IMR-90 (cell line): ENCODE measurements at regions of chr2 and their contacts with region 1.

Region 1: GRCh38 chr2:63698825-63699548 is 110.2 kb downstream of the MDH1 start:
- DNase-seq: peak; percentile 79
- ATAC-seq: peak; percentile 98
- H3K4me3 ChIP-seq: no peak overlapping the region
- H3K27ac ChIP-seq: no peak overlapping the region; the same call in 1 of the 2 replicates
- H3K4me1 ChIP-seq: peaks cover 5% of the 10 kb centered on the region; the same call in 1 of the 2 replicates
- H3K27me3 ChIP-seq: no peaks in the 10 kb centered on the region
- CTCF ChIP-seq: peak; percentile 59
- POLR2A ChIP-seq: no peak
- RAD21 ChIP-seq: peak; percentile 62

Region 2: GRCh38 chr2:63594660-63595059 is 104.3 kb before region 1 on chr2:
- CTCF ChIA-PET with region 1: no interaction called
- POLR2A ChIA-PET with region 1: no interaction called
- dilution Hi-C with region 1: no loop called
- in situ Hi-C with region 1: no loop called
- intact Hi-C with region 1: no loop called
- DNase-seq: no peak
- ATAC-seq: no peak
- H3K4me3 ChIP-seq: no peak overlapping the region
- H3K27ac ChIP-seq: no peak overlapping the region
- H3K4me1 ChIP-seq: peaks cover 2% of the 10 kb centered on the region; the same call in 1 of the 2 replicates
- H3K27me3 ChIP-seq: no peaks in the 10 kb centered on the region
- CTCF ChIP-seq: no peak
- POLR2A ChIP-seq: no peak
- RAD21 ChIP-seq: no peak

Region 3: GRCh38 chr2:63841254-63842022 is 142.5 kb after region 1 on chr2 and contains the start of gene UGP2:
- CTCF ChIA-PET with region 1: interaction called, 15 read pairs
- POLR2A ChIA-PET with region 1: interaction called, 4 read pairs
- dilution Hi-C with region 1: no loop called
- in situ Hi-C with region 1: no loop called
- intact Hi-C with region 1: loop called (anchors 1 kb)
- DNase-seq: peak; percentile 92
- ATAC-seq: peak; percentile 82
- H3K4me3 ChIP-seq: peak within 1 kb of the TSS; percentile 69
- H3K27ac ChIP-seq: peak within 1 kb of the TSS; percentile 90
- H3K4me1 ChIP-seq: peaks cover 6% of the 10 kb centered on the region
- H3K27me3 ChIP-seq: no peaks in the 10 kb centered on the region
- CTCF ChIP-seq: 0 out of 2 replicates have a peak, but pooled peaks have one; percentile 27
- POLR2A ChIP-seq: peak; percentile 93
- RAD21 ChIP-seq: no peak; the same call in 1 of the 2 replicates
- total RNA-seq, gene UGP2: 58.8 and 101 TPM in 2 replicates

Region 4: GRCh38 chr2:63849381-63850203 is 150.6 kb after region 1 on chr2:
- CTCF ChIA-PET with region 1: interaction called, 4 read pairs
- POLR2A ChIA-PET with region 1: no interaction called
- dilution Hi-C with region 1: loop called (anchors 25 kb)
- in situ Hi-C with region 1: loop called (anchors 10 kb)
- intact Hi-C with region 1: no loop called
- DNase-seq: no peak
- ATAC-seq: peak; percentile 81
- H3K4me3 ChIP-seq: no peak overlapping the region
- H3K27ac ChIP-seq: peak overlapping the region; percentile 26; the same call in 1 of the 2 replicates
- H3K4me1 ChIP-seq: peaks cover 14% of the 10 kb centered on the region
- H3K27me3 ChIP-seq: no peaks in the 10 kb centered on the region
- CTCF ChIP-seq: no peak
- POLR2A ChIP-seq: no peak
- RAD21 ChIP-seq: no peak

Region 5: GRCh38 chr2:63861220-63861822 is 162.3 kb after region 1 on chr2:
- CTCF ChIA-PET with region 1: interaction called, 14 read pairs
- POLR2A ChIA-PET with region 1: no interaction called
- dilution Hi-C with region 1: loop called (anchors 25 kb)
- in situ Hi-C with region 1: loop called (anchors 10 kb)
- intact Hi-C with region 1: no loop called
- DNase-seq: peak; percentile 58
- ATAC-seq: peak; percentile 52
- H3K4me3 ChIP-seq: no peak overlapping the region
- H3K27ac ChIP-seq: no peak overlapping the region
- H3K4me1 ChIP-seq: peaks cover 13% of the 10 kb centered on the region
- H3K27me3 ChIP-seq: no peaks in the 10 kb centered on the region
- CTCF ChIP-seq: peak; percentile 61
- POLR2A ChIP-seq: no peak
- RAD21 ChIP-seq: peak; percentile 70

Region 6: DNA sequence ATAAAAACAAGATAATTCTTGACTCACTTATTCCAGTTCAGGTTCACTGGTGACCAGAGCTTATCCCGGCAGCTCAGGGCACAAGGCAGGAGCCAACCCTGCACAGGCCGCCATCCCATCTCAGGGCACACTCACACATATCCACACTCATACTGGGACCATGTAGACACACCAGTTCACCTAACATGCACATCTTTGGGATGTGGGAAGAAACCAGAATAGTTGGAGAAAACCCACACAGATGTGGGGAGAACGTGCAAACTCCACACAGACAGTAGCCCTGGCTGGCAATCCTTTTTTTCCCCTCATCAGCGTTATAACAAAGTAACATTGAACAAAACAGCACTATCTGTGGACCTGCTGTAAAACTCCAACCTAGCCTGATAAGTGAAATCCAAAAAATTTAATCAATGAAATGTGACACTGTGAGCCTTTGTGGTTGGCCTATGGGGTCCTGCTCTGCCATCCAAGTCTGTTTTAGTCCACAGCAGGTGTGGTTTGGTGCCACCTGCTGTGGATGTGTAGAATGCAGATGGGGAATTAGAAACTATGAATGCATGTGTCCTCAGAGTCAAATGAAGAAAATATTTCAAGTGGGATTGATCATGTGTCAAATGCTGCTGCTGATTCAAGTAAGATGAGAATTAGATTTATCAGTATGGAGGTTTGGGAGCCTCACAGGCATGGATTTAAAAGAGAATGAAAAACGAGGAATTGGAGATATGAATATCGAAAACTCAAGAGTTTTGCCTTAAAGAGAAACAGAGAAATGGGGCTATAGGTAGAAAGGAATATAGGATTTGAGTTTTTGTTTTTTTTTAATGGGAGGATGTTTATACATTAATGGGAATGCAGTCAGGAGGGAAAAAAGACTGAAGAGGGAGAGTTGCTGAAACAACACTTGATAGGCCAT is 189.8 kb after region 1 on chr2:
- CTCF ChIA-PET with region 1: interaction called, 5 read pairs
- POLR2A ChIA-PET with region 1: no interaction called
- dilution Hi-C with region 1: no loop called
- in situ Hi-C with region 1: no loop called
- intact Hi-C with region 1: loop called (anchors 2 kb)
- DNase-seq: peak; percentile 48
- ATAC-seq: peak; percentile 87
- H3K4me3 ChIP-seq: no peak overlapping the region
- H3K27ac ChIP-seq: no peak overlapping the region
- H3K4me1 ChIP-seq: peaks cover 2% of the 10 kb centered on the region; the same call in 1 of the 2 replicates
- H3K27me3 ChIP-seq: no peaks in the 10 kb centered on the region
- CTCF ChIP-seq: peak; percentile 75
- POLR2A ChIP-seq: no peak
- RAD21 ChIP-seq: peak; percentile 79

Region 7: DNA sequence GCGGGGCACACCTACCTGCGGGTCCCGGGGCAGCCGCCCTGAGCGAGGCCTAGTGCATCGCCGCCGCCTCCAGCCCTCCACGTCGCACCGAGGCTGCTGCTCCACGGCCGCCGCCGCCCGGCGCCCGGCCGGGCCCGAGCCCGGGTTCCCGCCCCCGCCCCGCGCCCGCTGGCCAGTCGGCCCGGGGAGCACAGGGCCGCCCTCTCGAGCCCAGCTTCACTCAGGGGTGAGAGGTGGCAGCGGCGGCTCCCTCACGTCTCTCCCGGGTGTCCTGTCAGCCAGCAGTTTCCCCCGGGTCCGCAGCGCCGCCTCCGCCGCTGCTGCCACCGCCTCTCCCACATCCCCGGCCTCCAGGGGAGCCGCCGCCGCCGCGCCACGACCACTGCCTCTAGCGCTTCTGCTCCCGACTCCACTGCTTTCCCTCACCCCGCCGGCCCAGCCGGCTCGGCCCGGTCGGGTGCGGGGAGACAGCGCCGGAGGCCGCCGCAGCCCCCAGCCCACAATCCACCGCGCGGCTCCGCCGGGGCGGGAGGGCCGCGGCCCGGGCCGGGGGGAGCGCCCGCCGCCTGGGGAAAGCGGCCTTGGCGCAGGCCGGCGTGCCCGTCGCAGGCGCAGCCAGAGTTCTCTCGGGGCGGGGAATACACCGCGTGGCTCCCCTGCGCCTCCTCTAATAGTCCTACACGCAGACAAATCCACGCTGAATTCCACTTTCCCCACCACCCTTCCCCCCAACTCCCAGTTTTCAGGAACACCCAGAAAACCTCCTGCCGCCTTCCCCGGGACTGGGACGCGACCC is 320.1 kb after region 1 on chr2 and contains the start of gene VPS54:
- CTCF ChIA-PET with region 1: no interaction called
- POLR2A ChIA-PET with region 1: no interaction called
- dilution Hi-C with region 1: no loop called
- in situ Hi-C with region 1: no loop called
- intact Hi-C with region 1: loop called (anchors 5 kb)
- DNase-seq: peak; percentile 43
- ATAC-seq: peak; percentile 75
- H3K4me3 ChIP-seq: peak within 1 kb of the TSS; percentile 76
- H3K27ac ChIP-seq: peak within 1 kb of the TSS; percentile 99
- H3K4me1 ChIP-seq: peaks cover 7% of the 10 kb centered on the region
- H3K27me3 ChIP-seq: no peaks in the 10 kb centered on the region
- CTCF ChIP-seq: no peak
- POLR2A ChIP-seq: 0 out of 2 replicates have a peak, but pooled peaks have one; percentile 57
- RAD21 ChIP-seq: no peak
- total RNA-seq, gene VPS54: 18.1 and 23.3 TPM in 2 replicates

Region 8: DNA sequence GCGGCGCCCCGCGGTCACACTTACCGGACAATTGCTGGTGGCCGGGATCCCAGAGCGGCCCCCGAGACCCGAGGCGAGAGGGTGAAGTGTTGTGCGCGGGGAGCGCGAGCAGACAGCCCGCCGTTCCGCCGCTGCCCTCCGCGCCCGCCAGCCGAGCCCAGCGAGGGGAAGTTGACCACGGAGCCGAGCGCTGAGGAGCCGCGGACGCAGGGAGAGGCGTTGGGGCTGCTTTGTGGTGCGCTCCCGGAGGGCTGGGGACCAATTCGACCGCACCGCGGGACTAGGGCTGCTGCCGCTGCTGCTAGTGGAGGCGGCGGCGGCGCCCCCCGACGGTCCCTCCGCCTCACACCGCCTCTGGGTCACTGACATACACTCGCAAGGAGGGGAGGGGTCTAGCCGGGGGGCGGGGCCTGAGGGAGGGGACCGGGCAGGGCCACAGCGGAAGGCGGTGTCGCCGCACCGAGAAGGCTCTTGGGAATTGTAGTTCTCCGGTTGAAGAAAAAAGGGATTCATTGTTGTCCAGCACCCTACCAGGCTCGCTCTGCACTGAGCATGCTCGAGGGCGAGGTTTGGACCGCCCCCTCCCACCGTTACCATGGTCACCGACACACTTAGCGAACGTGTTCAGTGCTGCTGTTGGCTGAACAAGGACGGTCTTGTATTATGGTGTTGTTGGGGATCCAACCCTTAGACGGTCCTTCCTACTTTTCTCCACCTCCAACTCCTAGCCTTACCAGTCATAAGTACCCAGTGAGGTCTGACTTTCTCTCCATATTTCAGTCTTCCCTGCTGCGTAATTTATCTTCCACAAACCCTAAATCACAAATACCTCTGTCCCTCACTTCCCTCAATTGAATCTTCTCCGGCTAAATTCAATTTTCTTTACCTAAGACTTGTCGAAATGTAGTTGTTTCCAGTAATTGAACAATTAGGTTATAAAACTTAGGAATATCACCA is 445.3 kb after region 1 on chr2 and contains the start of gene PELI1:
- CTCF ChIA-PET with region 1: no interaction called
- POLR2A ChIA-PET with region 1: no interaction called
- dilution Hi-C with region 1: no loop called
- in situ Hi-C with region 1: no loop called
- intact Hi-C with region 1: loop called (anchors 10 kb)
- DNase-seq: peak; percentile 95
- ATAC-seq: peak; percentile 98
- H3K4me3 ChIP-seq: peak within 1 kb of the TSS; percentile 90
- H3K27ac ChIP-seq: peak within 1 kb of the TSS; percentile 52
- H3K4me1 ChIP-seq: no peaks in the 10 kb centered on the region
- H3K27me3 ChIP-seq: peaks cover 2% of the 10 kb centered on the region
- CTCF ChIP-seq: peak; percentile 20; the same call in 1 of the 2 replicates
- POLR2A ChIP-seq: peak; percentile 80
- RAD21 ChIP-seq: peak; percentile 12; the same call in 1 of the 2 replicates
- total RNA-seq, gene PELI1: 2.5 and 4.2 TPM in 2 replicates

Region 9: GRCh38 chr2:64311948-64312621 is 613.1 kb after region 1 on chr2:
- CTCF ChIA-PET with region 1: no interaction called
- POLR2A ChIA-PET with region 1: no interaction called
- dilution Hi-C with region 1: no loop called
- in situ Hi-C with region 1: no loop called
- intact Hi-C with region 1: no loop called
- DNase-seq: peak; percentile 78
- ATAC-seq: peak; percentile 91
- H3K4me3 ChIP-seq: no peak overlapping the region
- H3K27ac ChIP-seq: no peak overlapping the region
- H3K4me1 ChIP-seq: peaks cover 3% of the 10 kb centered on the region
- H3K27me3 ChIP-seq: peaks cover 28% of the 10 kb centered on the region
- CTCF ChIP-seq: peak; percentile 51
- POLR2A ChIP-seq: no peak
- RAD21 ChIP-seq: peak; percentile 58